PC-3 (cell line): ENCODE measurements at regions of chr20 and their contacts with region 1.

Region 1: GRCh38 chr20:25623736-25624499 is at the start of gene NANP:
- DNase-seq: peak; percentile 99
- ATAC-seq: peak; percentile 90
- H3K4me3 ChIP-seq: peak within 1 kb of the TSS; percentile 90
- H3K27ac ChIP-seq: peak within 1 kb of the TSS; percentile 89
- H3K4me1 ChIP-seq: peaks cover 18% of the 10 kb centered on the region
- H3K27me3 ChIP-seq: no peaks in the 10 kb centered on the region
- CTCF ChIP-seq: no peak
- total RNA-seq, gene NANP: 10.3 and 10.7 TPM in 2 replicates

Region 2: DNA sequence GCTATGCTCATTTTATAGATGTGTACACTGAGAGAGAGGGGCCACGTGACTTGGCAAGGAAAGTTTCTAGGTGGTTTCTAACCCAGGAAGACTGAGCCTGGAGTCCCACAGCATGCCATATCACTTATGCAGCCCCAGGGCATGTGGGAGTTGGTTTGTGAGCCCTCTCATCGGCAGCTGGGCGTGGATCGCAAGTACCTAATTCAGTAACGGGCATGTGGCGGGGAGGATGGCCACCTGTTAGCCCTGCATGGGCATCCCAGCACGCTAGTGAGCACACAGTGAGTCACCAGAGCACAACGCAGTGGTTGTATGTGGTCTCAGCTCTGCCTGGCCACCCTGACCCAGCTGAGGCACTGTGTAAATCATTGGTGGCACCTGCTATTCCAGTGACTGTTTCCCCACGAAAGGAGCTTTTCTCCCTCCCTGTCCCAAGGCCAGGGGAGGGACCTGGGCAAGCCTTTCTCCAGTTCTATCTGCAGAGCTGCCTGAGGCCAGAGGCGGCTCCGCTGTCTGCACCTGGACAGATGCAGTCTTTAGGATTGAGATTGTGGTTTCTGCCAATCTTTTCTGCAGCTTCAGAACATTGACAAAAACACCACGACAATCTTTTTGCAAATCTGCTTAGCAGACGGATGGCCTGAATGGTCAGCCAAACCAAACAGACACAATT is 126.8 kb before region 1 on chr20:
- CTCF ChIA-PET with region 1: no interaction called
- POLR2A ChIA-PET with region 1: no interaction called
- intact Hi-C with region 1: loop called (anchors 1 kb)
- DNase-seq: peak; percentile 100
- ATAC-seq: peak; percentile 99
- H3K4me3 ChIP-seq: no peak overlapping the region
- H3K27ac ChIP-seq: peak overlapping the region; percentile 43
- H3K4me1 ChIP-seq: peaks cover 20% of the 10 kb centered on the region
- H3K27me3 ChIP-seq: no peaks in the 10 kb centered on the region
- CTCF ChIP-seq: 0 out of 2 replicates have a peak, but pooled peaks have one; percentile 10

Region 3: DNA sequence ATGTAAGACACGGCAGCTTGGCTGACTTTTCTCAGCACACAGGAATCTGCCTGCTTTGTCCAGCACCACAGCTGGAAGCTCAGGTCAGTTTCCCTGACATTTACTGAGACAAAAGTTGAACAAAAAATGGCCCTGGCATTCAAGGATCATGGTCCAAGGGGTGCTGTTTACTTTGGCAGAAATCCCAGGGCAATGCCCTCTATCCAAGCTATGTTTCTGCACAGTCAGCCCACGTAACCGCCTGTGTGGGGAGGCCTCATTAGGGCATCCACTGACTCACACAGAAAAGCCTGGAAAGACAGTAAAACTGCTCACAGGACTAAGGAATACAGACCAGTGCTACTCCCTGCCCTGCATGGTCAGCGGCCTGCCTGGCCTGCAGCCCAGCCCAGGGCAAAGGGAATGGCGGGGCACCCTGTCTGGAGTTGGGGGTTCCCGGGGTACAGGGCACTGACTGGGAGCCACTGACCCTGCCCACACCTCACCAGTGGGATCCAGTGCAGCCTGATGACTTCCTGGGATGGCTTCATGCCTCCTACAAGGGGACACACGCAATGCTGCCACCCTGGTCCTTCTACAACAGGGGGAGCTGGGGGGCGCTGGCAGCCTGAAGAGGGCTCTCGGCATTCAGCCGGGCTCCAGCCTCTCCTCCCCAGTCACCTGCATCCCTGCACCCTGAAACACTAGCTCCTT is 115.7 kb before region 1 on chr20:
- CTCF ChIA-PET with region 1: no interaction called
- POLR2A ChIA-PET with region 1: no interaction called
- intact Hi-C with region 1: no loop called
- DNase-seq: peak; percentile 78
- ATAC-seq: peak; percentile 97
- H3K4me3 ChIP-seq: no peak overlapping the region
- H3K27ac ChIP-seq: peak overlapping the region; percentile 47
- H3K4me1 ChIP-seq: peaks cover 14% of the 10 kb centered on the region
- H3K27me3 ChIP-seq: no peaks in the 10 kb centered on the region
- CTCF ChIP-seq: no peak

Region 4: DNA sequence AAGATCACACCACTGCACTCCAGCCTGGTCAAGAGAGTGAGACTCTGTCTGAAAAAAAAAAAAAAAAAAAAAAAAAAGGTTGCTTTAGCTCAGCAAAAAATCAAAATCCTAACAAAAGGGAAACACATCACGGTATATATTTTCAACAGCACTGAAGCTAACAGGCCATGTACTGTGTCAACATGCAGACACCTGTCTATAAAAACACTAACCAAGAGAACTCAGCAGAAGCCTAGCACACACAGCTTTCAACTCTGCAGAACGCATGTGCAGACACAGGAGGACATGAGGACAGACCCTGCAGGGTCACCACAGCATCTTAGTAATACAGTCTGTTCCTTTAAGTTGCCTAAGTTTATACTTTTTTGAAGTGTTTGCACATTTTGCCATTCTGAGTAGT is 52.1 kb before region 1 on chr20:
- CTCF ChIA-PET with region 1: interaction called, 15 read pairs
- POLR2A ChIA-PET with region 1: no interaction called
- intact Hi-C with region 1: no loop called
- DNase-seq: no peak
- ATAC-seq: no peak
- H3K4me3 ChIP-seq: no peak overlapping the region
- H3K27ac ChIP-seq: no peak overlapping the region
- H3K4me1 ChIP-seq: peaks cover 7% of the 10 kb centered on the region; the same call in 1 of the 2 replicates
- H3K27me3 ChIP-seq: no peaks in the 10 kb centered on the region
- CTCF ChIP-seq: no peak

Region 5: DNA sequence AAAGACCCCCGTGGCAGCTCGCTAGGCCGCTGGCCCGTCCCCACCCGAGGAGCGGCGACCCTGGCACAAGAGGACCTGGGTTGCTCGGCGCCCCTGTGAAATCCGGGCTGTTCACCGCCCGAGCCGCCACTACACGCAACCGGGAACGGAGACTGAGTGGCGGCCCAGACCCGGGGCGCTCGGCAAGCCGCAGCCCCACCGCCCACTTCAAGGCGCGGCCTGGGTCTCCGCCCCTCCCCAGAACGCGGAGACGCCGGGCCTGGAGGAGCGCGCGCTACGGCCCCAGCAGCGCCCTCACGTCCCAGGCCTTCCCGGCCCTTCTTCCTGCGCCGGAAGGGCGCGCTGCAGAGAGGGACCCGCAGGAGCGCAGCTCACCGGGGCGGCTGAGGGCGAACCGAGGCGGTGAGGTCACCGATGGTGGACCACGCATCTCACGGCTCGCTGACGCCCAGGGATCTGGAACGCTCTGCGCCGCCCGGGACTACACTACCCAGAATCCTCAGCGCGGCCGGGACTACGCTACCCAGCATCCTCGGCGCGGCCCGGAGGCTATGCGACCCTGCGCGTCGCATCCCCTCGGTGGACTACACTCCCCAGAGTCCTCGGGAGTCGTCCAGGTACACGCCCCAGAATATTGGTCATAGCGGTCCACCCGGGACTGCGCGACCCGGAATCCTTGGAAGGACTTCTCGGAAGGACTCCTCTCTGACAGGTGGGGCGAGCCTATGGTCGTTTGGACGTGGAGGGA is 72.6 kb after region 1 on chr20 and contains the start of gene ZNF337:
- CTCF ChIA-PET with region 1: no interaction called
- POLR2A ChIA-PET with region 1: no interaction called
- intact Hi-C with region 1: loop called (anchors 2 kb)
- DNase-seq: peak; percentile 98
- ATAC-seq: peak; percentile 98
- H3K4me3 ChIP-seq: peak within 1 kb of the TSS; percentile 92
- H3K27ac ChIP-seq: peak within 1 kb of the TSS; percentile 10
- H3K4me1 ChIP-seq: peaks cover 8% of the 10 kb centered on the region; the same call in 1 of the 2 replicates
- H3K27me3 ChIP-seq: no peaks in the 10 kb centered on the region
- CTCF ChIP-seq: peak; percentile 37; the same call in 1 of the 2 replicates
- total RNA-seq, gene ZNF337: 12.8 and 13.5 TPM in 2 replicates

Region 6: GRCh38 chr20:25739615-25740320 is 115.8 kb after region 1 on chr20:
- CTCF ChIA-PET with region 1: no interaction called
- POLR2A ChIA-PET with region 1: no interaction called
- intact Hi-C with region 1: no loop called
- DNase-seq: peak; percentile 90
- ATAC-seq: peak; percentile 74
- H3K4me3 ChIP-seq: no peak overlapping the region
- H3K27ac ChIP-seq: peak overlapping the region; percentile 10; the same call in 1 of the 2 replicates
- H3K4me1 ChIP-seq: peaks cover 29% of the 10 kb centered on the region
- H3K27me3 ChIP-seq: no peaks in the 10 kb centered on the region
- CTCF ChIP-seq: no peak